Panc1 (cell line): ENCODE measurements at regions of chr2 and their contacts with region 1.

Region 1: GRCh38 chr2:232300894-232301387 is 77.6 kb upstream of the ALPP start:
- DNase-seq: no peak
- ATAC-seq: peak; percentile 97
- H3K4me3 ChIP-seq: no peak overlapping the region
- H3K27ac ChIP-seq: no peak overlapping the region
- H3K4me1 ChIP-seq: peaks cover 11% of the 10 kb centered on the region
- H3K27me3 ChIP-seq: no peaks in the 10 kb centered on the region
- CTCF ChIP-seq: no peak

Region 2: GRCh38 chr2:232250246-232251175 is 50.4 kb before region 1 on chr2:
- CTCF ChIA-PET with region 1: no interaction called
- POLR2A ChIA-PET with region 1: no interaction called
- in situ Hi-C with region 1: no loop called
- intact Hi-C with region 1: no loop called
- DNase-seq: no peak
- ATAC-seq: no peak
- H3K4me3 ChIP-seq: no peak overlapping the region
- H3K27ac ChIP-seq: no peak overlapping the region
- H3K4me1 ChIP-seq: no peaks in the 10 kb centered on the region
- H3K27me3 ChIP-seq: no peaks in the 10 kb centered on the region
- CTCF ChIP-seq: no peak

Region 3: GRCh38 chr2:232286001-232286868 is 14.7 kb before region 1 on chr2:
- CTCF ChIA-PET with region 1: interaction called, 10 read pairs
- POLR2A ChIA-PET with region 1: interaction called, 3 read pairs
- in situ Hi-C with region 1: no loop called
- intact Hi-C with region 1: no loop called
- DNase-seq: no peak
- ATAC-seq: no peak
- H3K4me3 ChIP-seq: no peak overlapping the region
- H3K27ac ChIP-seq: no peak overlapping the region
- H3K4me1 ChIP-seq: no peaks in the 10 kb centered on the region
- H3K27me3 ChIP-seq: no peaks in the 10 kb centered on the region
- CTCF ChIP-seq: no peak